HEK293 (cell line): ENCODE measurements at regions of chr1 and their contacts with region 1.

Region 1: DNA sequence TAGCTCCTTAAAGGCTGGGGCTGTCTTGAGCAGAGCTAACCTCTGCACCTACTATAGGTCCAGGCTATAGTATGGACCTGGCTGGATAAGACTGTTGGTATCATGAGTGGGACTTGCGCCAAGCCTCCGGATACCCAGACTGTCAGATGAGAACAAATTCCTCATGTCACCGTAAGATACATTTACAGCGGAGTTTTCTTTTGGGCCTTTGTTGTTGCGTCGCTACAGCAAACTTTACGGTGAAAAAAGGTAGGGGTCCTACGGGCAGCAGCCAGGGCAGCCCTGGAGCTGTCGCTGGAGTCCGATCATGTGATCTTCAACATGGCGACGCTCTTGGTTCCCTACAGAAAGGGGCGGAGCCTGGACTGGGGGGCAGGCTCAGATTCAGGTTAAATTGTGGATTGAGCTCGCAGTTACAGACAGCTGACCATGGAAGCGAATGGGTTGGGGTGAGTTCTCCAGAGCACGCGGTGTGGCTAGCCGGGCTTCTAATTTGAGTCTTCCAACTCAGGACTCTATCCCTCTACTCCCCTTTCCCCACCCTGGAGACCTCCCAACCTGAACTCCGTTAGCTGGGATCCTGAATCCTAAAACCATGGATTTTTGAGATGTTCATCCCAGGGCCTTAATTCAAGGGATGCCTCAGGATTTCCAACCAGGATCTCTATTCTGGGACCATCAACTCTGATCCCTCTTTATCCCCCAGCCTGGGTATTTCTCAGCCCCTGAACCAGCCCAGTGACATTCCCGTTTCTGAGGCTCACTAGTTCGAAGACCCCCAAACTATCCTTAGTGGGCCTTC is at the start of gene UROD:
- H3K4me3 ChIP-seq: peak within 1 kb of the TSS; percentile 84
- H3K27ac ChIP-seq: peak within 1 kb of the TSS; percentile 42; the same call in 1 of the 2 replicates
- H3K4me1 ChIP-seq: no peaks in the 10 kb centered on the region
- CTCF ChIP-seq: no peak

Region 2: DNA sequence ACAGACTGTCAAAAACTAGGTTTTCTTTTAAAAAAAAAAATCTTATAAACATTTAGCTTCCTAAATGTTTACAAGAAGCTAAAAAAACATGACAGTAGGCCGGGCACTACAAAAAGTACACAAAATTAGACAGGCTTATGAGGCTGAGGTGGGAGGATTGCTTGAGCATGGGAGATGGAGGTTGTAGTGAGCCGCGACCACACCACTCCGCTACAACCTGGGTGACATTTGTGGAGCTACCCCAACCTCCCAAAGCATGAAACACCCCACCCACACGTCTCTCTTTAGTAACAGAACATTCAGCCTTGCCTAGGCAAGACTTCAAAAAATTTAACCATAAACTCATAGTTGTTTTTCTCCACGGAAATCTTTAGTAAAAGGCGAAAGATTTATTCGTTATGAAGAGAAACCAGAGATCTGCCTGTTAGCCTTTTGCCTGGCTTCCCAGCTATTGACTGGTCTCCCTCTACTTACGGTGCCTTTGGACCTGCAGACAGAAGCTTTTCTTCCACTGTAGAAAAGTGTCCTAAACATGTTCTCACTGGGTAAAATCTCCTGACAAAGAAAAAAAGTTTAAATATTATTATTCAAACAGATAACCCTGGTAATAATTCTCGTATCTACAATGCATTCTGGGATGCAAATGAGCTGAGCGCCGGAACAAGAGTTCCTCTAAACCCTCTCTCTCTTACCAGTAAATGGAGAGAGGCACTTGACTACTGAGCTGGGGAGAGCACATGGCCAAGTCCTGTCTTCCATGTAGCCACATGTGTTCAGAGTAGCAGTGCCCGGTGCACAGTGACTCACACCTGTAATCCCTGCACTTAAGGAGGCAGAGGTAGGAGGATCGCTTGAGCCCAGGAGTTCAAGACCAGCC is 290.3 kb before region 1 on chr1:
- CTCF ChIA-PET with region 1: no interaction called
- POLR2A ChIA-PET with region 1: interaction called, 19 read pairs
- H3K4me3 ChIP-seq: no peak overlapping the region
- H3K27ac ChIP-seq: peak overlapping the region; percentile 57
- H3K4me1 ChIP-seq: no peaks in the 10 kb centered on the region
- CTCF ChIP-seq: no peak

Region 3: DNA sequence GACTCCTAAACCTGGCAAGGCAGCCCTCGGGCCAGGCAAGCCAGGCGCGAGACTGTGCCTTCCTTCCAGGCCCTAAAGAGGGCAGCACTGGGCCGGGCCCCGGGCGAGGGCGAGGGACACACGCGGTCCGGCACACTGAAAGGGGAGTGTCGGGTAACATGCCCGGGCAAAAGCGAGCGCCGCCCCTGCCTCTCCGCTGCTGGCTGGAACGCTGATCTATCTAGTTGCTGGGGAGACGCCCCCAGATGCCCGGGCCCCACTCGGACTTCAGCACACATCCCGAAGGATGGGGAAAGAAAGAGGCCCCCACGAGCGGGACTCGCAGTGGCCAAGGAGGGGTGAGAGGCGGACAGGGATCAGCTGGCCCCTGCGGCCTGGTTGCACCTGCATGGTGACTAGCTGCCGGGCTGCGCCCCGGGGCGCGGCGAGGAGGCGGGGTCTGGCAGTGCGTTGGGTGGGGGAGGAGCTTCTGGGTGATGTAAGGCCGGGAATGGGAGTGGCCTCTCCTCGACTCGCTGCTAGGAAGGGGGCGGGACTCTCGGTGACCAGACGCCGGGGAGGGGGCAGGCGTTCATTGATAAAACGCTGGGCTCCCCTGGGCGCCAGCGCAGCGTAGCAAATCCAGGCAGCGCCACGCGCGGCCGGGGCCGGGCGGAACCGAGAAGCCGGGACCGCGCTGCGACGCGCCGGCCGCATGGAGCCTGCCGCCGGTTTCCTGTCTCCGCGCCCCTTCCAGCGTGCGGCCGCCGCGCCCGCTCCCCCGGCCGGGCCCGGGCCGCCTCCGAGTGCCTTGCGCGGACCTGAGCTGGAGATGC is 212.1 kb before region 1 on chr1 and contains the start of gene PLK3:
- CTCF ChIA-PET with region 1: interaction called, 3 read pairs
- POLR2A ChIA-PET with region 1: interaction called, 15 read pairs
- H3K4me3 ChIP-seq: peak within 1 kb of the TSS; percentile 70
- H3K27ac ChIP-seq: peak within 1 kb of the TSS; percentile 80
- H3K4me1 ChIP-seq: no peaks in the 10 kb centered on the region
- CTCF ChIP-seq: peak; percentile 97

Region 4: GRCh38 chr1:44835738-44836675 is 176.0 kb before region 1 on chr1:
- CTCF ChIA-PET with region 1: interaction called, 22 read pairs
- POLR2A ChIA-PET with region 1: no interaction called
- H3K4me3 ChIP-seq: no peak overlapping the region
- H3K27ac ChIP-seq: no peak overlapping the region
- H3K4me1 ChIP-seq: peaks cover 9% of the 10 kb centered on the region
- CTCF ChIP-seq: peak; percentile 73

Region 5: GRCh38 chr1:45001011-45001481 is 11.0 kb before region 1 on chr1:
- CTCF ChIA-PET with region 1: no interaction called
- POLR2A ChIA-PET with region 1: interaction called, 16 read pairs
- H3K4me3 ChIP-seq: no peak overlapping the region
- H3K27ac ChIP-seq: no peak overlapping the region
- H3K4me1 ChIP-seq: no peaks in the 10 kb centered on the region
- CTCF ChIP-seq: no peak

Region 6: DNA sequence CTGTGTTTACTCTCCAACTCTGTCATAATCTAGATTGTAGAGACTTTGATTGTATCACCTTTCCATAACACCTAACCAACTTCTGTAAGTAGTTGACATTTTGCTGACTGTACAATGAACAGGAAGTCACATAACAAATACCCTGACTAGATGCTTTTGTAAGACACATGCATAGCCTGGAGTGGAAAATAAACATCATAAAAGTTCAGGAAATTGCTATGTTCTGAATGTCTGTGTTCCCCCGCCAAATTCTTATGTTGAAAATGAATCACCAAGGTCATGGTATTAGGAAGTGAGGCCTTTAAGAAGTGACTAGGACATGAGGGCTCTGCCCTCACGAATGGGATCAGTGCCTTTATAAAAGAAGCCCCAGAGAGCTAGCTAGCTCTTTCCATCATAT is 234.7 kb after region 1 on chr1:
- CTCF ChIA-PET with region 1: no interaction called
- POLR2A ChIA-PET with region 1: no interaction called
- H3K4me3 ChIP-seq: no peak overlapping the region
- H3K27ac ChIP-seq: no peak overlapping the region
- H3K4me1 ChIP-seq: no peaks in the 10 kb centered on the region
- CTCF ChIP-seq: no peak

Region 7: GRCh38 chr1:45490626-45491486 is 478.8 kb after region 1 on chr1 and contains the start of gene TESK2:
- CTCF ChIA-PET with region 1: interaction called, 45 read pairs
- POLR2A ChIA-PET with region 1: interaction called, 6 read pairs
- H3K4me3 ChIP-seq: peak within 1 kb of the TSS; percentile 92
- H3K27ac ChIP-seq: peak within 1 kb of the TSS; percentile 66; the same call in 1 of the 2 replicates
- H3K4me1 ChIP-seq: no peaks in the 10 kb centered on the region
- CTCF ChIP-seq: peak; percentile 25; the same call in 1 of the 2 replicates